Activated naive CD4-positive, alpha-beta T cell treated with anti-CD3 and anti-CD28 coated beads for 36 hours (primary cell): ENCODE measurements at regions of chr5 and their contacts with region 1.

Region 1: GRCh38 chr5:37248970-37249686 is at the start of gene CPLANE1:
- DNase-seq: peak; percentile 60
- H3K4me3 Mint-ChIP-seq: peak within 1 kb of the TSS; percentile 82
- H3K27ac Mint-ChIP-seq: no peak within 1 kb of the TSS
- H3K4me1 Mint-ChIP-seq: peaks cover 20% of the 10 kb centered on the region
- H3K27me3 Mint-ChIP-seq: no peaks in the 10 kb centered on the region
- total RNA-seq, gene CPLANE1: 3.6 to 5.2 TPM

Region 2: GRCh38 chr5:37086466-37087173 is 162.5 kb before region 1 on chr5:
- CTCF ChIA-PET with region 1: no interaction called
- intact Hi-C with region 1: no loop called
- DNase-seq: no peak
- H3K4me3 Mint-ChIP-seq: no peak overlapping the region
- H3K27ac Mint-ChIP-seq: no peak overlapping the region
- H3K4me1 Mint-ChIP-seq: no peaks in the 10 kb centered on the region
- H3K27me3 Mint-ChIP-seq: no peaks in the 10 kb centered on the region

Region 3: DNA sequence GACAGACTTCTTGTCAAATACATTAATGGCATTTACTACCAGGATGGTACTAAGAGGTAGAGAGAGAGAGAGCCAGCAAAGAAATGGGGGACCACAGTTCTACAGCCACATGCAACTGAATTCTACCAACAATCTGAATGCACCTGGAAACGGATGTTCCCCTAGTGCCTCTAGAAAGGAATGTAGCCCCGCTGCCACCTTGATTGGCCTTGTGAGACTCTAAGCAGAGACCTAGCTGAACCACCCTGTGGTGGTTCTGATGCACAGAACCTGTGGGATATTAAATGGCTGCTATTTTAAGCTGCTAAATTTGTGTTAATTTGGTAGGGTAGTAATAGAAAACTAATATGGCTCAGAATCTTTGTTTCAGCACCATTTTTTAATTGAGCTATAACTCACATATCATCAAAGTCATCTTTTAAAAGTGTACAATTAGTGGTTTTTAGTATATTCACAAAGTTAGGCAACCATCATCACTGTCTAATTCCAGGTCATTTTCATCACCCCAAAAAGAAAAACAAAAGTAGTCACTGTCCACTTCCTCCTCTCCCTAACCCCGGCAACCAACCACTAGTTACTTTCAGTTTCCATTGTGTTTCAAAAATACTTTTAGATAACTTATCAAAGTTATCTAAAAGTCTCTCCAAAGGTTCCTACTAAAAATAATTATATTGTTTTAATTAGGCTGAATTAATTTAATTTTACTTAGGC is 51.6 kb before region 1 on chr5:
- CTCF ChIA-PET with region 1: interaction called, 4 read pairs
- intact Hi-C with region 1: loop called (anchors 2 kb)
- DNase-seq: no peak
- H3K4me3 Mint-ChIP-seq: peak overlapping the region; percentile 52
- H3K27ac Mint-ChIP-seq: peak overlapping the region; percentile 20
- H3K4me1 Mint-ChIP-seq: peaks cover 15% of the 10 kb centered on the region
- H3K27me3 Mint-ChIP-seq: no peaks in the 10 kb centered on the region

Region 4: GRCh38 chr5:37370864-37371726 is 122.0 kb after region 1 on chr5 and contains the start of gene NUP155:
- CTCF ChIA-PET with region 1: no interaction called
- intact Hi-C with region 1: loop called (anchors 2 kb)
- DNase-seq: peak; percentile 94
- H3K4me3 Mint-ChIP-seq: peak within 1 kb of the TSS; percentile 99
- H3K27ac Mint-ChIP-seq: peak within 1 kb of the TSS; percentile 96
- H3K4me1 Mint-ChIP-seq: peaks cover 37% of the 10 kb centered on the region
- H3K27me3 Mint-ChIP-seq: no peaks in the 10 kb centered on the region
- total RNA-seq, gene NUP155: 79.2 to 87.8 TPM